ENCODE measurements at regions of chr3 and their contacts with region 1.

Region 1: GRCh38 chr3:98901392-98902350 is at the start of gene DCBLD2:
- DNase-seq: peak; percentile 91
- ATAC-seq: peak; percentile 99
- H3K4me3 ChIP-seq: peak within 1 kb of the TSS; percentile 80 to 89
- H3K27ac ChIP-seq: peak within 1 kb of the TSS; percentile 97
- H3K4me1 ChIP-seq: peaks cover 14% of the 10 kb centered on the region
- H3K27me3 ChIP-seq: no peaks in the 10 kb centered on the region
- CTCF ChIP-seq: no peak
- total RNA-seq, gene DCBLD2: 54.4 TPM

Region 2: DNA sequence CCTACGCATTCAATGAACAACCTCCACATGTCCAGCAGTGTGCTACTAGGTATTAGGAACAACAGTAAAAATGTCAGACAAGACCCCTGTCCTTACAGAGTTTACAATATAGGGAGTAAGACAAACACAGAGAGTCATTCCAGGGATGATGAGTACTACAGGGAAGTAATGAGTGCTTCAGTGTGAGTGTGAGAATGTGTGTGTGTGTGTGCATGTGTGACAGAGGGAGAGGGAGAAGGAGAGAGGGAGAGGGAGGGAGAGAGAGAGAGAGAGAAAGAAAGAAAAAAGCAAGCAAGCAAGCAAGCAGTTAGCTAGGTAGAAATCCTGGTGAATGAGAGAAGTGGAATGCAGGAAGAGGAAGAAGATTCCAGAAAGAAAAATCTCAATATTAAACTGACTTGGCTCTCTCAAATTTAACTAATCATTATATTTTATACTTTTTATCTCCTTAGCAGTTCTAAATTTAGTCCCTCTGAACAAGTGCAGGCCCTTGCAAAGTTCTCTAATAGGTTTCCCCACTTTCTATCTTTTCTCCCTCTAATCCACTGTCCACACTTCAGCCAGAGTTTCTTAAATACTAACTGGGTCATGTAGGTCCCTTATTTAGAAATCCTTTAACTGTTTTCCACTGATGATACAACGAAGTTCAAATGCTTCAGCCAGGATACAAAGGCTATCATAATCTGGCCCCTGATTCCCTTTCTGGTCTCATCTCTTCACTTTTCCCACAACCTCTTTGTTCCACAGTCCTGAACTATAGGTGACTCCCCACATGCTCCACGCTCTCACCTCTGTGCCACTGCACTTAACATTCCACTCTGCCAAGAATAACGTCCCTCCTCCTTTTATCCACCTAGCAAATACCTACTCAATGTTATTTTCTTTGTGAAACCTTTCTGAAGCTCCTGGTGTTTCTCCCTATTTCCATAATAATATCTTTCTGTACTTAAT is 10.4 kb before region 1 on chr3:
- CTCF ChIA-PET with region 1: no interaction called
- POLR2A ChIA-PET with region 1: interaction called, 23 read pairs
- in situ Hi-C with region 1: no loop called
- intact Hi-C with region 1: no loop called
- DNase-seq: no peak
- ATAC-seq: no peak
- H3K4me3 ChIP-seq: no peak overlapping the region
- H3K27ac ChIP-seq: no peak overlapping the region
- H3K4me1 ChIP-seq: peaks cover 17% of the 10 kb centered on the region; the same call in 1 of the 2 replicates
- H3K27me3 ChIP-seq: no peaks in the 10 kb centered on the region
- CTCF ChIP-seq: no peak

Measured in Panc1 (cell line).